ENCODE measurements at regions of chr6 and their contacts with region 1.

Region 1: GRCh38 chr6:53794720-53795253 is at the start of gene LRRC1:
- DNase-seq: peak; percentile 96
- total RNA-seq, gene LRRC1: 6.4 TPM

Region 2: GRCh38 chr6:53837865-53838769 is 43.3 kb after region 1 on chr6:
- intact Hi-C with region 1: loop called (anchors 5 kb)
- DNase-seq: no peak

Region 3: GRCh38 chr6:53926525-53926924 is 131.7 kb after region 1 on chr6:
- intact Hi-C with region 1: loop called (anchors 5 kb)
- DNase-seq: no peak

Region 4: DNA sequence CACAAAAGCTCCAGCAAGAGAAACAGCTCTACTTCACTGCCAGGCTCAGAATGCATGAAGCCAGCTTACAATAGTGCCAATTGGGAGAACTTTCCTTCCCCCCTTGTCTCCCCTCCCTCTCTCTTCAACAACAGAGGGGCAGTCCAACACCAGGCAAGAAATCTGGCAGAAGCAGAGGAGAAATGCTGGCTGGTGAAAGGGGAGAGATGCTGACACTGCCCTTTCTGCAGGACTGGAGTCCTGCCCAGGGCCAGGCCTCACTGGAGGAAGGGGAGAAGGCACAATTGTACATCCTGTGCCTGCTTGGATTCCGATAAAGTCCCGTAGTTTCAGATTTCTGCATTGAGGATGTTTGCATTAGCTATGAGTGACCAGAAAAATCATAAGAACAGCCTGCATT is 148.6 kb after region 1 on chr6:
- intact Hi-C with region 1: loop called (anchors 5 kb)
- DNase-seq: no peak

Region 5: DNA sequence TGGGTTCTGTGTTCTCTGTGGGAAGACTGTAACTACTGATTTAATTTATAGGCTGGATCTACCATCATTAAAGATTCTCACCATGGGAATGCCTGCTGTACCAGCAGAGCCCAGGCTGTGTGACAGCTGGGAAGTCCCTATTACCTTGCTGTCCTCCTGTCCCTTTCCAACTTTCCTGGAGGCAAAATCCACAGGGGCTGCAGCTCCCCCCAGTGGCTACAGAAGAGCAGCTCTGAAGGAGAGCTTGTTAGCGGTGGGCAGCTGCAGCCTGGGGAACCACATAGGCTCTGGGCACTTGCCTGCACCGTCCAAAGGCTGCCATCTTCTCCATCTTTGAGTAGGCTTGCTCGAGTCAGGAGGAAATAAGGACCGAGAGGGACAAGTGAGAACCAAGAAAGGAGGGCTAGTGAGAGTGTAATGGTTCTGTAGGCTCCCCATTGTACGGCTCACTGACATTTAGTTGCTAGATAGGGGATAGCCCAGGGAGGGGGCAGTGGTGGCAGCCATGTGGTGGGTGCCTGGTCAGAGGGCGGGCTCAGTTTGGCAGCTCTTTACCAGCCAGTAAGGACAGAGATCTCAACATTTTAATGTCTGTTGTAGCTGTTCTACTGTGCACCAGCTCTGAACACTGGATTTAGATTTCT is 161.4 kb after region 1 on chr6:
- intact Hi-C with region 1: loop called (anchors 1 kb)
- DNase-seq: peak; percentile 81

Measured in cardiac septum (tissue), 1 donor.